Activated CD8-positive, alpha-beta T cell treated with anti-CD3 and anti-CD28 coated beads, Interleukin-2, amount 10 ng/mL, durations not matched to agents 7 days and 5 days (primary cell): ENCODE measurements at regions of chr14 and their contacts with region 1.

Region 1: DNA sequence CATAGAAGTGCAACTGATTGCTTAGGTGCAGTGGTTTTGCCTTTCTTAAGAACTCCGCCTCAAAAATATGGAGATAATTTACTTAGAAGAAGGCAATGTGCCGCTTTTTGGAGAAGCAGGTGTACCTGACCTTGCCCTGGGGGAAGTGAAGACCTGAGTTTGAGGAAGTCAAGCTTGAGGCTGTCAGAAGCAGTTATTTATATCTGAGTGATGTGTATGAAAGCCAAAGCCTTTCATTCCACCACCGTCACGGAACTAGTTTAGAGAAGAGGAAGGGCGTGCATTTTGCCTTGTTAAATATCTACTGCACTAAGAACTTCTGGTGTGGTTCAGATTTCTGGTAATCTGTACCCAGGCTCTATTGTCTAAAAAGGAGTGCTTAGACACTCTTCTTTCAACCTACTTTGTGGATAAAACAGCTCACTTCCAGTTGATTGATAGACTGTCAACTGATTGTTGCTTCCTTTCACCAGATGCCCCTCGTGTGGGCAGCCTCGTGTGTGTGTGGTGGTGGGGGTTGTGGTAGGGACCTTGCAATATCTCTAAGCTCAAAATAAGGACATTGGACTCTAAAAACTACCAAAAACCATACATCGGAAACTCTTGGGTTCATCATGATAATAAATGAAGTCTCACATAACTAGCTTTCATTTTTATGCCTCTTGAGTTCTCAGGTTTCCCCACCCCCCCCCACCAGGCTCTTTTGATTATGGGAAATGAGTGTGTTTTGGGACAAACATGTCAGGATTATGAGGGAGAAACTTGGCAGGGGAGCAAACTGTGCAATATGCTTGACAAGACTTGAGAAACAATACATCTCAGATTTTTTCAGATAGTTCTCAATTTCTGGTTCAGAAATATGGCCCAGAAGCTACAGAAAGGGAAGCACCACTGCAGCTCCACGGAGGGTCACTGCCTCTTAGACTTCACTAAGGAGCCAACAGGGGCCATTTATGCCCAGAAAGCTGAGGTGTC is 78.6 kb downstream of the ARF6 start:
- DNase-seq: peak; percentile 79
- ATAC-seq: peak; percentile 79
- H3K4me3 Mint-ChIP-seq: peak overlapping the region; percentile 70
- H3K27ac Mint-ChIP-seq: peak overlapping the region; percentile 96
- H3K4me1 Mint-ChIP-seq: peaks cover 65% of the 10 kb centered on the region
- H3K27me3 Mint-ChIP-seq: no peaks in the 10 kb centered on the region

Region 2: DNA sequence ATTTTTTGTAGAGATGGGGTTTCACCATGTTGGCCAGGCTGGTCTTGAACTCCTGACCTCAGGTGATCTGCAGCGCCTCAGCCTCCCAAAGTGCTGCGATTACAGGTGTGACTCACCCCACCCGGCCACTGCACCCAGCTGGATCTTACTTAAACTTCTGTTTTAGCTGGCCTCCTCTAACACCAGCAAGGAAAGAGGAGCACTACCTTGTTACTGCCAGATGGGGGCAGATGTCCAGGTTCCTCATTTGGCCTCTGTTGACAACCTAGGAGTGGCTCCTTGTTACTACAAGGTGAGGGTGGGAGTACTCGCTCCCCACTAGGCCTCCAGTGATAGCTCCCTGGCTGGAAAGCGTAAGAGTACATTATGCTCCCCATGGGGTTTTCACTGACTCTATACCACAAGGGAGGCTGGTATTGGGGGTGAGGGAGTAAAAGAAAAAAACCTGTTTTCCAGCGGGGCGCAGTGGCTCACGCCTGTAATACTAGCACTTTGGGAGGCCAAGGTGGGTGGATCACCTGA is 91.7 kb before region 1 on chr14:
- CTCF ChIA-PET with region 1: interaction called, 12 read pairs
- POLR2A ChIA-PET with region 1: interaction called, 4 read pairs
- DNase-seq: peak; percentile 73
- ATAC-seq: peak; percentile 91
- H3K4me3 Mint-ChIP-seq: no peak overlapping the region
- H3K27ac Mint-ChIP-seq: peak overlapping the region; percentile 43
- H3K4me1 Mint-ChIP-seq: peaks cover 29% of the 10 kb centered on the region
- H3K27me3 Mint-ChIP-seq: peaks cover 2% of the 10 kb centered on the region

Region 3: GRCh38 chr14:49940808-49941421 is 30.5 kb before region 1 on chr14:
- CTCF ChIA-PET with region 1: interaction called, 27 read pairs
- POLR2A ChIA-PET with region 1: interaction called, 56 read pairs
- DNase-seq: peak; percentile 44
- ATAC-seq: peak; percentile 54
- H3K4me3 Mint-ChIP-seq: peak overlapping the region; percentile 31
- H3K27ac Mint-ChIP-seq: peak overlapping the region; percentile 87
- H3K4me1 Mint-ChIP-seq: peaks cover 69% of the 10 kb centered on the region
- H3K27me3 Mint-ChIP-seq: no peaks in the 10 kb centered on the region

Region 4: DNA sequence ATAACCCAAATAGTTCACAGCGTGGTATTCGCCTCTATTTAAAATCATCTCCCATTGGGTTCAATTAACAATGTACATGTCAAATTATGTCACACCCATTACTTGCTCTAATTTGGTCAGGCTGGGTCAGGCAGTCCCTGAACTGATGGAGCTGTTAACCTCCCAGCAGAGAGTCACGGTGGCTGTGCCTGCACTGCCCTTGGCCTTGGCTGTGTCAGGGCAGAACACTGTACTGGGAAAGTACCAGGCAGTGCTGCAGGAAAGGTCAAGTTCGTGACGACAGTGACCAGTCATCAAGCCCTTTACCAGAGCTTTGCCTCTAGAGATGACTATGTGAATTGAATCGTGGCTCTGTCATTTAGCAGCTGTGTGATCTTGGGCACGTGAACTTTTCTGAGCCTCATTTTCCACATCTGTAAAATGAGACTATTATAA is 21.5 kb after region 1 on chr14:
- CTCF ChIA-PET with region 1: interaction called, 10 read pairs
- POLR2A ChIA-PET with region 1: interaction called, 307 read pairs
- DNase-seq: no peak
- ATAC-seq: peak; percentile 39
- H3K4me3 Mint-ChIP-seq: no peak overlapping the region
- H3K27ac Mint-ChIP-seq: peak overlapping the region; percentile 74
- H3K4me1 Mint-ChIP-seq: peaks cover 55% of the 10 kb centered on the region
- H3K27me3 Mint-ChIP-seq: no peaks in the 10 kb centered on the region

Region 5: DNA sequence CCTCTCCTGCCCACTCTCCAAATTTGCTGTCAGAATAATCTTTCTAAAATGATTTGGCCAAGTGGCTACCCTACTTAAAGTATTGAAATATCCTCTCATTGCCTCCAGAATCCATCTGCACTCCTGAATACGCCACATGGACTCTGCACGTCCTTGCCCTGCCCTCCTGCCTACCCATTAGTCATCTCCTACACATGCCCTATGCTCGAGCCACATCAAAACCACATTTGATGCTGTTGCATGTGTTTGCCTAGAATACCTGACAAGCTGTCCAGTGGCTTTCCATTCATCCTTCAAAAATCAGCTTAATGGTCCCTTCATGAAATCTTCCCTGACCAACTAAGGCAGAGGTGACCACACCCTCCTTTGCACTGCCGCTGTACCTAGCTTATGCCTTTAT is 127.9 kb after region 1 on chr14:
- CTCF ChIA-PET with region 1: interaction called, 25 read pairs
- POLR2A ChIA-PET with region 1: interaction called, 6 read pairs
- DNase-seq: no peak
- ATAC-seq: no peak
- H3K4me3 Mint-ChIP-seq: no peak overlapping the region
- H3K27ac Mint-ChIP-seq: peak overlapping the region; percentile 33
- H3K4me1 Mint-ChIP-seq: peaks cover 85% of the 10 kb centered on the region
- H3K27me3 Mint-ChIP-seq: no peaks in the 10 kb centered on the region